CD8-positive, alpha-beta T cell (primary cell): ENCODE measurements at regions of chr1 and their contacts with region 1.

Region 1: GRCh38 chr1:24391882-24392603 is 21.5 kb downstream of the STPG1 start:
- DNase-seq: peak in 7 of 9 experiments; percentile 32 to 78 (median 65)
- ATAC-seq: peak; percentile 68
- H3K4me3 ChIP-seq: peak overlapping the region in 1 of 2 experiments; percentile 19
- H3K4me3 Mint-ChIP-seq: peak overlapping the region; percentile 78
- H3K27ac ChIP-seq: peak overlapping the region in 1 of 2 experiments; percentile 88
- H3K27ac Mint-ChIP-seq: peak overlapping the region; percentile 94
- H3K4me1 ChIP-seq: peaks cover 34% of the 10 kb centered on the region
- H3K4me1 Mint-ChIP-seq: peaks cover 31% of the 10 kb centered on the region
- H3K27me3 ChIP-seq: no peaks in the 10 kb centered on the region
- H3K27me3 Mint-ChIP-seq: no peaks in the 10 kb centered on the region
- CTCF ChIP-seq: peak; percentile 60

Region 2: GRCh38 chr1:24070821-24071393 is 321.1 kb before region 1 on chr1:
- CTCF ChIA-PET with region 1: interaction called, 3 read pairs
- POLR2A ChIA-PET with region 1: no interaction called
- intact Hi-C with region 1: loop called (anchors 2 kb)
- DNase-seq: peak; percentile 38 to 80 (median 71)
- ATAC-seq: peak; percentile 94
- H3K4me3 ChIP-seq: no peak overlapping the region
- H3K4me3 Mint-ChIP-seq: no peak overlapping the region
- H3K27ac ChIP-seq: no peak overlapping the region
- H3K27ac Mint-ChIP-seq: no peak overlapping the region
- H3K4me1 ChIP-seq: no peaks in the 10 kb centered on the region
- H3K4me1 Mint-ChIP-seq: peaks cover 4% of the 10 kb centered on the region
- H3K27me3 ChIP-seq: no peaks in the 10 kb centered on the region
- H3K27me3 Mint-ChIP-seq: peaks cover 3% of the 10 kb centered on the region
- CTCF ChIP-seq: peak; percentile 86

Region 3: DNA sequence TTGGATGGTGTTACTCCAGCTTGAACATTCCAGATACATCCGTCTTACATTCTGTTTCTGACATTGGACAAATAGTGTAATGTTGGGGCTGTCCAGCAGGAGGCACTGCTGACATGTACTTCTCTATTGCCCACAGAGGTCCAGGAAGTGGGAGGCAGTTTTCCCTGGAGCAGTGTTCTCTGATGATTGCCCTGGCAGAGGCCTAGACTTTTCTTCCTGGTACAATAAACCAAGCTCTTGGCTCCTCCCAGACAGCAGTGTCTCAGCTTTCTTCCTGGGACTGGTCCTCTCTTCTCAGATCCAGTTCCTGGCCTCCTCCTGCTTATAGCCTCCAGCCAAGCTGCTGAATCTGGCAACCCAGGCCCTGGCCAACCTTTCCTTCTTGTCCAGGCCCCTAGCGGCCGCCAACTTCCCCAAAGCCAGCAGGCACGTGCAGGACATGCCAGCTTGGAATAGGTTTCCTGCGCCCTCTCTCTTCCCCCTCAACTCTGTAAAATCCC is 190.1 kb before region 1 on chr1:
- CTCF ChIA-PET with region 1: interaction called, 333 read pairs
- POLR2A ChIA-PET with region 1: interaction called, 20 read pairs
- intact Hi-C with region 1: loop called (anchors 1 kb)
- DNase-seq: peak; percentile 26 to 72 (median 59)
- ATAC-seq: no peak
- H3K4me3 ChIP-seq: no peak overlapping the region
- H3K4me3 Mint-ChIP-seq: no peak overlapping the region
- H3K27ac ChIP-seq: no peak overlapping the region
- H3K27ac Mint-ChIP-seq: no peak overlapping the region
- H3K4me1 ChIP-seq: peaks cover 4% of the 10 kb centered on the region
- H3K4me1 Mint-ChIP-seq: peaks cover 8% of the 10 kb centered on the region
- H3K27me3 ChIP-seq: no peaks in the 10 kb centered on the region
- H3K27me3 Mint-ChIP-seq: peaks cover 2% of the 10 kb centered on the region
- CTCF ChIP-seq: peak; percentile 80

Region 4: GRCh38 chr1:24361811-24362210 is 30.2 kb before region 1 on chr1:
- CTCF ChIA-PET with region 1: interaction called, 14 read pairs
- POLR2A ChIA-PET with region 1: no interaction called
- intact Hi-C with region 1: no loop called
- DNase-seq: no peak
- ATAC-seq: no peak
- H3K4me3 ChIP-seq: no peak overlapping the region
- H3K4me3 Mint-ChIP-seq: no peak overlapping the region
- H3K27ac ChIP-seq: no peak overlapping the region
- H3K27ac Mint-ChIP-seq: no peak overlapping the region
- H3K4me1 ChIP-seq: no peaks in the 10 kb centered on the region
- H3K4me1 Mint-ChIP-seq: no peaks in the 10 kb centered on the region
- H3K27me3 ChIP-seq: no peaks in the 10 kb centered on the region
- H3K27me3 Mint-ChIP-seq: no peaks in the 10 kb centered on the region
- CTCF ChIP-seq: no peak

Region 5: DNA sequence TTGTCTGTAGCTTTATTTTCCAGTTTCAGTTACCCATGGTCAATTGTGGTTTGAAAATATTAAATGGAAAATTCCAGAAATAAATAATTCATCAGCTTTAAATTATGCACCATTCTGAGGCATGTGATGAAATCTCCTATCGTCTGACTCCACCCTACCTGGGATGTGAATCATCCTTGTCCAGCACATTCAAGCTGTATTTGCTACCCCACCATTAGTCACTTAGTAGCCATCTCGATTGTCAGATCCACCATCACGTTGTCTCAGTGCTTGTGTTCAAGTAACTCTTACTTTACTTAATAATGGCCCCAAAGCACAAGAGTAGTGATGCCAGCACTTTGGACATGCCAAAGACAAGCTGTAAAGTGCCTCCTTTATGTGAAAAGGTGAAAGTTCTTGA is 17.5 kb after region 1 on chr1:
- CTCF ChIA-PET with region 1: interaction called, 43 read pairs
- POLR2A ChIA-PET with region 1: interaction called, 6 read pairs
- intact Hi-C with region 1: no loop called
- DNase-seq: no peak
- ATAC-seq: no peak
- H3K4me3 ChIP-seq: no peak overlapping the region
- H3K4me3 Mint-ChIP-seq: no peak overlapping the region
- H3K27ac ChIP-seq: no peak overlapping the region
- H3K27ac Mint-ChIP-seq: no peak overlapping the region
- H3K4me1 ChIP-seq: peaks cover 6% of the 10 kb centered on the region
- H3K4me1 Mint-ChIP-seq: peaks cover 28% of the 10 kb centered on the region
- H3K27me3 ChIP-seq: no peaks in the 10 kb centered on the region
- H3K27me3 Mint-ChIP-seq: no peaks in the 10 kb centered on the region
- CTCF ChIP-seq: no peak

Region 6: GRCh38 chr1:24635195-24635843 is 243.3 kb after region 1 on chr1:
- CTCF ChIA-PET with region 1: interaction called, 44 read pairs
- POLR2A ChIA-PET with region 1: interaction called, 3 read pairs
- intact Hi-C with region 1: loop called (anchors 1 to 2 kb)
- DNase-seq: peak in 2 of 9 experiments; percentile 63 to 75
- ATAC-seq: peak; percentile 93
- H3K4me3 ChIP-seq: no peak overlapping the region
- H3K4me3 Mint-ChIP-seq: no peak overlapping the region
- H3K27ac ChIP-seq: no peak overlapping the region
- H3K27ac Mint-ChIP-seq: no peak overlapping the region
- H3K4me1 ChIP-seq: no peaks in the 10 kb centered on the region
- H3K4me1 Mint-ChIP-seq: peaks cover 2% of the 10 kb centered on the region
- H3K27me3 ChIP-seq: peaks cover 0 to 3% of the 10 kb centered on the region in 2 experiments
- H3K27me3 Mint-ChIP-seq: peaks cover 4% of the 10 kb centered on the region
- CTCF ChIP-seq: peak; percentile 57

Region 7: GRCh38 chr1:24659993-24660665 is 268.1 kb after region 1 on chr1:
- CTCF ChIA-PET with region 1: no interaction called
- POLR2A ChIA-PET with region 1: no interaction called
- intact Hi-C with region 1: no loop called
- DNase-seq: no peak
- ATAC-seq: no peak
- H3K4me3 ChIP-seq: no peak overlapping the region
- H3K4me3 Mint-ChIP-seq: no peak overlapping the region
- H3K27ac ChIP-seq: no peak overlapping the region
- H3K27ac Mint-ChIP-seq: peak overlapping the region; percentile 38
- H3K4me1 ChIP-seq: peaks cover 23% of the 10 kb centered on the region
- H3K4me1 Mint-ChIP-seq: peaks cover 32% of the 10 kb centered on the region
- H3K27me3 ChIP-seq: no peaks in the 10 kb centered on the region
- H3K27me3 Mint-ChIP-seq: no peaks in the 10 kb centered on the region
- CTCF ChIP-seq: no peak